ENCODE measurements at regions of chrX and their contacts with region 1.

Region 1: DNA sequence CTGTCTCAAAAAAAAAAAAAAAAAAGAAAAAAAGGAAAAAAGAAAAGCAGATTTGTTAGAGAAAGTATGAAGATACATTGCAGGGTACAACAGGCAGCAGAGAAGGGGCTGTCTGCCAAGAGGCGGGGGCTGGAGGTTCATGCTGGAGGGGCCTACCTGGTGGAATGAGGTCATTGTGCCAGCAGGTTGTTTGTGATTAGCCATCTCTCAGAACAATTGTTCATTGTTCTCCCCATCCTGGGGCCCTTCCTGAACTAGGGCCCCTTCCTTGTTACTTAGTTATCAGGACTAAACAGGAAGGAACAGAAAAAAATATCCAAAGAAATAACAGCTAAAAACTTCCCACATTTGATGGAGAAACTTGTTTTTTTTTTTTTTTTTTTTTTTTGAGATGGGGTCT is 14.0 kb upstream of the GPKOW start:
- DNase-seq: no peak
- H3K4me3 ChIP-seq: no peak overlapping the region
- H3K27ac ChIP-seq: no peak overlapping the region
- H3K4me1 ChIP-seq: no peaks in the 10 kb centered on the region
- H3K27me3 ChIP-seq: no peaks in the 10 kb centered on the region
- CTCF ChIP-seq: no peak
- EP300 ChIP-seq: no peak
- POLR2A ChIP-seq: no peak
- RAD21 ChIP-seq: no peak

Region 2: DNA sequence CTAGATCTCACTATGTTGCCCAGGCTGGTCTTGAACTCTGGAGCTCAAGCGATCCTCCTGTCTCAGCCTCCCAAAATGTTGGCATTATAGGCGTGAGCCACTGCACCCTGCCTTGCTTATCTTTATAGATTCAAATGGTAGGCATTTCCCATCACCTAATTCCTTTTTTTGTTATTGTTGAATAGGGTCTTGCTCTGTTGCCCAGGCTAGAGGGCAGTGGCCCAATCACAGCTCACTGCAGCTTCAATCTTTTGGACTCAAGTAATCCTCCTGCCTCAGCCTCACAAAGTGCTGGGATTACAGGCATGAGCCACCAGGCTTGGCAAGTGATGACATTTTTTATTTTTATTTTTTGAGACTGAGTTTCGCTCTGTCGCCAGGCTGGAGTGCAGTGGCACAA is 41.1 kb before region 1 on chrX:
- CTCF ChIA-PET with region 1: no interaction called
- POLR2A ChIA-PET with region 1: no interaction called
- DNase-seq: no peak
- H3K4me3 ChIP-seq: no peak overlapping the region
- H3K27ac ChIP-seq: no peak overlapping the region
- H3K4me1 ChIP-seq: no peaks in the 10 kb centered on the region; a peak in 1 of 7 replicates
- H3K27me3 ChIP-seq: no peaks in the 10 kb centered on the region
- CTCF ChIP-seq: no peak
- EP300 ChIP-seq: no peak
- POLR2A ChIP-seq: no peak
- RAD21 ChIP-seq: no peak

Region 3: GRCh38 chrX:49155900-49156837 is 18.7 kb after region 1 on chrX:
- CTCF ChIA-PET with region 1: interaction called, 22 read pairs
- POLR2A ChIA-PET with region 1: no interaction called
- DNase-seq: peak in 1 of 2 experiments; percentile 78
- H3K4me3 ChIP-seq: peak overlapping the region; percentile 45 to 77 (median 48)
- H3K27ac ChIP-seq: peak overlapping the region; percentile 85; the same call in 1 of the 2 replicates
- H3K4me1 ChIP-seq: peaks cover 0 to 4% (median under 1%) of the 10 kb centered on the region in 4 experiments; a peak in 3 of 7 replicates
- H3K27me3 ChIP-seq: peaks cover 1 to 6% (median 3%) of the 10 kb centered on the region in 4 experiments; a peak in 4 of 7 replicates
- CTCF ChIP-seq: peak in 2 of 3 experiments; percentile 64 to 65; a peak in 3 of 4 replicates
- EP300 ChIP-seq: no peak
- POLR2A ChIP-seq: peak in 1 of 2 experiments; percentile 46; a peak in 1 of 3 replicates
- RAD21 ChIP-seq: peak in 1 of 2 experiments; percentile 35; a peak in 1 of 4 replicates

Region 4: DNA sequence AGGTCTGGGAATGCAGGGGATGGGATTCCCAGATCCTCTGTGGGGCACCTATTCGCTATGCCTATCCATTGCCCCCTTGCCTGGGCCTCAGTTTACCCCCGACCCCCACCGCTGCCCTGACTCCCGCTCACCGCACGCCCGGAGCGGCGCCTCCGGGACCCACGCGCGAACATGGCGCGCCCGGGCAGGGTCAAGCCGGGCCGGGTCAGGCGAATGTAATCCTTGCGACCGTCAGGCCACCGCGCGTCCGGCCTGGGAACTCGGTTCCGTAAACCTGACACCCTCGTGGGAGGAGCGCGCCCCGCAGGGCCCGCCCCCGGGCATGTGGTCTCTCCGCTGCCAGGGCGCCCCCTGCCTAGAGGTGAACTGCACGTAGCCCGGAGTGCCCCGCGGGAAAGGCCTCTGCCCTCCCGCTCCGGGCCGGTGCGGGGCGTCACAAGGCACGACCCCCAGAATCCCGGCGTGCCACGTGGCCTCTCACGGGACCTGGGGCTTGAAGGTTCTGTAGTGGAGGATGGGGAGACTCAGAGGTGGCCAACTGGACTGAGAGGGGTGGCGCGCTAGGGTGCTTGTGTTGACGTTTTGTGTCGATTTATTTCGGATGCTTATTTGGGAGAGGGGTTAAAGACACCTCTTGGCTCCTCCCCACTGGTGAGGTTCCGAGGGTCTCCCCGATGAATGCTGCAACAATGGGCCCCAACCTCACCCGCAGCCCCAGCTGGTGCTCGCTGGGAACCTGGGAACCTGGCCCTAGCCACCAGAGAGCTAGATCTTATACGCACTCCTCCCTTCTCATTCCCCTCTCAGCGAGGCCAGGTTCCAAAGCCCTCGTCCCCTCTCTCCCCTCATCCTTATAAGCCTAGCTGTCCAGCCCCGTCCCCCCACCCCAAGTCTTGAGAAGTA is 48.9 kb after region 1 on chrX and contains the start of gene PRICKLE3:
- CTCF ChIA-PET with region 1: no interaction called
- POLR2A ChIA-PET with region 1: no interaction called
- DNase-seq: peak in 1 of 2 experiments; percentile 84
- H3K4me3 ChIP-seq: peak within 1 kb of the TSS; percentile 53 to 75 (median 63)
- H3K27ac ChIP-seq: peak within 1 kb of the TSS; percentile 32; the same call in 1 of the 2 replicates
- H3K4me1 ChIP-seq: peaks cover 0 to 6% (median 5%) of the 10 kb centered on the region in 4 experiments; a peak in 3 of 7 replicates
- H3K27me3 ChIP-seq: no peaks in the 10 kb centered on the region
- CTCF ChIP-seq: peak in 2 of 3 experiments; percentile 19 to 32; a peak in 2 of 4 replicates
- EP300 ChIP-seq: no peak
- POLR2A ChIP-seq: no peak
- RAD21 ChIP-seq: 0 out of 4 replicates have a peak, but pooled peaks of 1 of the 2 experiments have one; percentile 5
- total RNA-seq, gene PRICKLE3: 8.4 and 10.6 TPM in 2 replicates

Region 5: DNA sequence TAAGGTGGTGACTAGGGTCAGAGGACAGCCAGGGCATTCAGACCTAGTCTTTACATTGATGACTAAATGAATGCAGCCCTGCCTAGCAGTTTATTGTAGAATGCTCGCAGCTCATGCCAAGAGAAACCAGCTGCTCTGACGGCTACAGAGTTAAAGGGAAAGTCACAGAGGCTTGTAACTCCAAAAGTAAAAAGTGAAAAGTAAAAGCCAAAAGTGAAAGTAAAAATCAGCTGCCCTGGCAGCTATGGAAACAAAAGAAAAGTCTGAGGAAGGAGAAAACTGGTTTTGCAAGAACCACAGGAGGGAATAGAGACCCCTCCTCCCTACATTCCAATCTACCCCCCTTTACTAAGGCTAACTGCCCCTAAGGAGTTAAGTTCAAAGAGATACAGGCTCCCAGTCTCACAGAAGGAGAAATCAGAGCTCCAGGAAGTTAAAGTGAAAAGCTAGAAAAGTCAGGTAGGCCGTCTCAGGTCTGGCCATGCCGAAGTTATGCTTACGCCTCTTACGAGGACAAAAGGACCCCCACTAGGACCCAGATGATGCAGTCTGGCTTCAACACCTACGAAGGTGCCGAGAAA is 172.0 kb after region 1 on chrX:
- CTCF ChIA-PET with region 1: no interaction called
- POLR2A ChIA-PET with region 1: no interaction called
- DNase-seq: peak in 1 of 2 experiments; percentile 29
- H3K4me3 ChIP-seq: peak overlapping the region; percentile 7 to 52 (median 22); a peak in 4 of 8 replicates
- H3K27ac ChIP-seq: peak overlapping the region; percentile 86; the same call in 1 of the 2 replicates
- H3K4me1 ChIP-seq: peaks cover 4 to 22% (median 13%) of the 10 kb centered on the region in 4 experiments
- H3K27me3 ChIP-seq: no peaks in the 10 kb centered on the region
- CTCF ChIP-seq: no peak
- EP300 ChIP-seq: 0 out of 3 replicates have a peak, but pooled peaks of 1 of the 2 experiments have one; percentile 34
- POLR2A ChIP-seq: no peak
- RAD21 ChIP-seq: peak in 1 of 2 experiments; percentile 10; a peak in 1 of 4 replicates